Panc1 (cell line): ENCODE measurements at regions of chr6 and their contacts with region 1.

Region 1: DNA sequence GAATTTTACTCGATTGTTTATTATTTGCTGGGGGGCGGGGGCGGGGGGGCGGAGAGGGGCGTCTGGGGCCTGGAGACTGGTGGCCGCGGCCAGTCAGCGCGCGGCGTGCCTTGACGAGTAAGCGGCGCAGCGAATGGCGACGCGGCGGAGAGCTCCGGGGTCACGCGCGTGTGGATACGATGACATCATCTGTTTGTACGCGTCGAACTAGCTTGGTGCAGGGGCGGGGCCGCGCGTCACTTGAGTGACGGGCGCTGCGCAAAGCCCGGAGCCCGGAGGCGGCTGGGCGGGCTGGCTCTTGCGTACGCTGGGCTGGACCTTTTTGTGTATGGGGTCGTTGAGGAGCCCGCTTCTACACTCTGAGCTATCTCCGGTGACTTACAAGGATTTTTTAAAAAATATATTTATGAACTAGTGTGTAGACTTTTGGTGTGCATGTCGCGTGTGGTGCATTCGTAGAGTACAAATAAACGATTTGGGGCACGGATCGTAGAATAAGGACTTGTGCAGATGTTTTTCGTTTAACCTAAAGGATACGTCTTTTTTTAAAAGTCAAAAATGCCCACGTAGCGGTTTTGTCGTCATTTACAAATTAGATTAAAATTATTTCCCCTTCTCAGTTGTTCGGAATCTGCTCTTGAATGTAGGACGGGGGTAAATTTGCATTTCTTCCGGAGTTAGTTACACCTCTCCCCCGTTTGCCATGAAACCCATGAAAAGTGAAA is 2.2 kb upstream of the FOXO3 start:
- DNase-seq: peak; percentile 94
- ATAC-seq: peak; percentile 76
- H3K4me3 ChIP-seq: peak overlapping the region; percentile 96 to 98
- H3K27ac ChIP-seq: peak overlapping the region; percentile 82
- H3K4me1 ChIP-seq: peaks cover 13% of the 10 kb centered on the region
- H3K27me3 ChIP-seq: peaks cover 3% of the 10 kb centered on the region; the same call in 1 of the 2 replicates
- CTCF ChIP-seq: no peak

Region 2: GRCh38 chr6:108707328-108707960 is 148.9 kb after region 1 on chr6:
- CTCF ChIA-PET with region 1: no interaction called
- POLR2A ChIA-PET with region 1: interaction called, 12 read pairs
- in situ Hi-C with region 1: no loop called
- intact Hi-C with region 1: no loop called
- DNase-seq: no peak
- ATAC-seq: no peak
- H3K4me3 ChIP-seq: no peak overlapping the region
- H3K27ac ChIP-seq: no peak overlapping the region
- H3K4me1 ChIP-seq: no peaks in the 10 kb centered on the region
- H3K27me3 ChIP-seq: no peaks in the 10 kb centered on the region
- CTCF ChIP-seq: no peak

Region 3: GRCh38 chr6:108782179-108783041 is 223.9 kb after region 1 on chr6:
- CTCF ChIA-PET with region 1: no interaction called
- POLR2A ChIA-PET with region 1: interaction called, 4 read pairs
- in situ Hi-C with region 1: no loop called
- intact Hi-C with region 1: loop called (anchors 5 kb)
- DNase-seq: peak; percentile 96
- ATAC-seq: peak; percentile 96
- H3K4me3 ChIP-seq: peak overlapping the region; percentile 49 to 68
- H3K27ac ChIP-seq: peak overlapping the region; percentile 49
- H3K4me1 ChIP-seq: peaks cover 11% of the 10 kb centered on the region
- H3K27me3 ChIP-seq: no peaks in the 10 kb centered on the region; the same call in 1 of the 2 replicates
- CTCF ChIP-seq: peak; percentile 97